Activated CD4-positive, alpha-beta T cell treated with anti-CD3 and anti-CD28 coated beads, Interleukin-2, amount 10 ng/mL, durations not matched to agents 24 days and 14 days (primary cell): ENCODE measurements at regions of chr13 and their contacts with region 1.

Region 1: GRCh38 chr13:33542283-33543088 is 256.9 kb upstream of the STARD13 start:
- DNase-seq: peak; percentile 100
- H3K4me3 Mint-ChIP-seq: peak overlapping the region; percentile 90
- H3K27ac Mint-ChIP-seq: peak overlapping the region; percentile 99
- H3K4me1 Mint-ChIP-seq: peaks cover 37% of the 10 kb centered on the region
- H3K27me3 Mint-ChIP-seq: peaks cover 2% of the 10 kb centered on the region

Region 2: GRCh38 chr13:32538621-32539246 is 1003.8 kb before region 1 on chr13 and contains the start of gene N4BP2L2:
- intact Hi-C with region 1: loop called (anchors 1 kb)
- DNase-seq: peak; percentile 97
- H3K4me3 Mint-ChIP-seq: peak within 1 kb of the TSS; percentile 98
- H3K27ac Mint-ChIP-seq: peak within 1 kb of the TSS; percentile 99
- H3K4me1 Mint-ChIP-seq: peaks cover 37% of the 10 kb centered on the region
- H3K27me3 Mint-ChIP-seq: peaks cover 8% of the 10 kb centered on the region
- total RNA-seq, gene N4BP2L2: 87.5 and 88.0 TPM in 2 replicates

Region 3: DNA sequence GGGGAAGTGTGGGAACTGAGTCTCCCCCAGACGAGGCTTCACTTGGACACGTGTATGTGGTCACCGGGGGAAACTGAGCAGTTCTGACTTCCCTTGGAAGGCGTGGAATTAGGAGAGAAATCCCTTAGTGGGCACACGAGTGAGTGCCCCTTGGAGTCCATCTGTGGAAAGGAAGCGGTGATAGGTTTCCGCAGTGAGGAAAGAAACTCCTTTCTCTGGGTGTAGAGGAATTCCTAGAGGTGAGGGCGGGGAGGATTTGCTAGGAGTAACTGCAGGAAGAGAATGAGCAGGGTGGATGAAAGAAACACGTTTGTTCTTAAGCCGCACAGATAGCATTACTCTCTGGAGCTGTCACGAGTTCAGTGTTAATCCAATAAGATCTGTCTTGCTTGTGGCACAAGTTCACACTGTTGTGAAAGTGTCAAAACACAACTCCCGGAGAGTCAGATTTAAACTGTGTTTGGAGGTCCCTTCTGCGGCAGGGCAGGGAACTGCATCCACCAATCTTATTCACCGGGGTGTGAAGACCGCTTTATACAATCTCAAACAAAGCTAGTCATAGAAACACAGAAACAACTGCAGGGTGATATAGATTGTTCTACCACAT is 525.1 kb before region 1 on chr13:
- intact Hi-C with region 1: loop called (anchors 1 kb)
- DNase-seq: peak; percentile 84
- H3K4me3 Mint-ChIP-seq: peak overlapping the region; percentile 76
- H3K27ac Mint-ChIP-seq: peak overlapping the region; percentile 68
- H3K4me1 Mint-ChIP-seq: peaks cover 11% of the 10 kb centered on the region
- H3K27me3 Mint-ChIP-seq: peaks cover 59% of the 10 kb centered on the region

Region 4: DNA sequence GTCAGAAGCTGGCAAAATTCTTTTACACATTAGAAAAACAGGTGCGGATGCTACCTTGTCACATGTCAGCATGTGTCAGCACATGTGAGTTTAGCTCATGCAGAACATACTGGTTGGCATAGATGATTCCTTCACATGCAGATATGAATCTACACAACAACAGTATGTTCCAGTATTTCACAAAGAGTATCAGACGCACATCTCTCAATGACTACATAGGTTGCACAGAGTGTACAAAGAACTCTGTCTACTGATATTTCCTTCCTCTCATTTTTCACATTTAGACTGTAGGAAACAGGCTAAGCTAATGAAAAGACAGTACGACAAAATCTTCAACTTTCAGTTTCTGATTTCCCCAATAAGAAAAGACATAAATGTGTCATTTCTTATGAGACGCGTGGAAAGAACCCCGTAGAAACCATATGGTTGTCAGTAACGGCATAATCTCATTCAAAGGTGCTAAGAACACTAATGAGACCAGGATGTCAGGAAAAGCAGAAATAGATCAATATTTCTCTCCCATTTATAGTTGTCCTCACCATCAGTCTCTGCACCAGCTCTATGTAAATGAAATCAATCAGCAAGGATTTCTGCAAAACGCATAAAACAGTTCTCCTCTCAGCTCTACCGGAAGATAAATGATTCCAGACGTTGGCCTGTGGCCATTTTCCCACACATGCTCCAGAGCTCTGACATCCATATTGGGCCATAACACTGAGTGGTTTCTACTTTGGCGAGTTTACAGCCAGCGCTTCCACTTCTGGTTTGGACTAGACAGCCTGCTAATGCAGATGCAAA is 338.2 kb before region 1 on chr13:
- intact Hi-C with region 1: loop called (anchors 1 kb)
- DNase-seq: no peak
- H3K4me3 Mint-ChIP-seq: peak overlapping the region; percentile 82
- H3K27ac Mint-ChIP-seq: peak overlapping the region; percentile 87
- H3K4me1 Mint-ChIP-seq: peaks cover 49% of the 10 kb centered on the region
- H3K27me3 Mint-ChIP-seq: no peaks in the 10 kb centered on the region

Region 5: DNA sequence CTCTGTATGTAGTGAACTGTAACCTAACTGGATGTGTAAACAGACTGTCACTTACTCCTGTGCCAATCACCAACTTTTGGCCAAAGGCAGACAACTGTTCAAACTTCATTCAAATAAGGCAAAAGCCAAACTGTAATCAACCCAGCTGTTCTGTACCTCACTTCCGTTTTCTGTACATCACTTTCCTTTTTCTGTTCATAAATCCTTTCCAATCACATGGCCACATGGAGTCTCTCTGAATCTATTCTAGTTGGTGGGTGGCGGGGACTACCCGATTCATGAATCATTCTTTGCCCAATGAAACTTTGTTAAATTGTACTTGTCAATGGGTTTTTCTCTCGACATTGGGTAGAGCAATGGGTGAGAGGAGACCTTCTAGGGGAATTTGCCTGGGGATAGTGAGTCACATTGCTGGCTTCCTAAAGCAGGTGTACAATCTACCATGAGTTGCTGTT is 97.2 kb after region 1 on chr13:
- intact Hi-C with region 1: loop called (anchors 1 kb)
- DNase-seq: peak; percentile 65
- H3K4me3 Mint-ChIP-seq: no peak overlapping the region
- H3K27ac Mint-ChIP-seq: peak overlapping the region; percentile 61
- H3K4me1 Mint-ChIP-seq: peaks cover 39% of the 10 kb centered on the region
- H3K27me3 Mint-ChIP-seq: no peaks in the 10 kb centered on the region